HepG2 (cell line): ENCODE measurements at regions of chr10 and their contacts with region 1.

Region 1: GRCh38 chr10:52004342-52004949 is 305.1 kb upstream of the CSTF2T start:
- DNase-seq: peak; percentile 5
- ATAC-seq: peak; percentile 52; the same call in 2 of the 3 replicates
- H3K4me3 ChIP-seq: no peak overlapping the region
- H3K27ac ChIP-seq: no peak overlapping the region
- H3K4me1 ChIP-seq: no peaks in the 10 kb centered on the region
- H3K27me3 ChIP-seq: no peaks in the 10 kb centered on the region
- CTCF ChIP-seq: peak; percentile 44
- EP300 ChIP-seq: no peak
- POLR2A ChIP-seq: no peak
- RAD21 ChIP-seq: no peak

Region 2: GRCh38 chr10:51063659-51064535 is 940.5 kb before region 1 on chr10:
- CTCF ChIA-PET with region 1: no interaction called
- POLR2A ChIA-PET with region 1: no interaction called
- in situ Hi-C with region 1: no loop called
- intact Hi-C with region 1: loop called (anchors 1 kb)
- DNase-seq: peak; percentile 7
- ATAC-seq: peak; percentile 52; the same call in 2 of the 3 replicates
- H3K4me3 ChIP-seq: no peak overlapping the region
- H3K27ac ChIP-seq: no peak overlapping the region
- H3K4me1 ChIP-seq: no peaks in the 10 kb centered on the region
- H3K27me3 ChIP-seq: no peaks in the 10 kb centered on the region
- CTCF ChIP-seq: peak; percentile 52
- EP300 ChIP-seq: no peak
- POLR2A ChIP-seq: no peak
- RAD21 ChIP-seq: 0 out of 2 replicates have a peak, but pooled peaks have one; percentile 16

Region 3: DNA sequence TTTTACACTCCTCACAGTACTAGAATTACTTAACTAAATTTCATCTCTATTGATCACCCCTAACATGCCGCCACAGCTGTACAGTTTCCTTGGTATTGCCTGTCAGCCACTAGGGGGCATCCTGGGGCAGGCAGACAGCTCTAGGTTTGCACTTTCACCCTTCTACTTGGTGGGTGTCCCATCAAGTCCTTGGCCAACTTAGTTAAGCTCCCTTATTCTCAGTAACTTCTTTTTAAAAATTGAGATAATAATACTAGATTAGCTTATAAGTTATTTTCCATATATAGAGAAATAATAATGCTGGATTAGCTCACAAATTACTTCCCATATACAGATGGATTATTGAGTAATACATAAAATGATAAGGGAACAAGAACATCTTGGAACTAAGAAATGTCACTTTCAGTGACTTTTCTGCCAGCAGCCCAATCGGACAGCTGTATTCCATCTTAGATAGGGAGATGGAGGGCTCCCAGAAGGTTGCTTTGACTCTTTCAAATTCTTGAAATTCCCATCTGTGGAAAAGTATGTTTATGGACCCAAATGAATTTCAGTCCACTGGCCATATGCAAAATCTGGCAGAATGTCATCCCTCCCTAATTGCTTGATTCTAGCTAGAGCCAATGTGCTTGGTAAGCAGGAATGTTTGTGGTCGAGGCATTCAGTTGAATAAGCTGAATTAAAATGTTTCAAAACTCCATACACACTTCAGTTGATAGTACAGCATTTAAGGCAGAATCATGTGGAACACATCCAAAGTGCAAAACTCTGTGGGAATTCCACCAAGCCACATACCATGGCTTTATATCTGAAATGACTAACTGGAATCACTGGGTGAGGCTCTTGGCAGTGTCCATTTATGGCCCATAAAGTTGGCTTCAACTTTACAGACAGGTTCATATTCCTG is 614.8 kb before region 1 on chr10:
- CTCF ChIA-PET with region 1: no interaction called
- POLR2A ChIA-PET with region 1: no interaction called
- in situ Hi-C with region 1: no loop called
- intact Hi-C with region 1: loop called (anchors 1 kb)
- DNase-seq: peak; percentile 32
- ATAC-seq: peak; percentile 91
- H3K4me3 ChIP-seq: no peak overlapping the region
- H3K27ac ChIP-seq: no peak overlapping the region
- H3K4me1 ChIP-seq: no peaks in the 10 kb centered on the region
- H3K27me3 ChIP-seq: no peaks in the 10 kb centered on the region
- CTCF ChIP-seq: peak; percentile 77
- EP300 ChIP-seq: no peak
- POLR2A ChIP-seq: no peak
- RAD21 ChIP-seq: peak; percentile 57